CD14-positive monocyte (primary cell): ENCODE measurements at regions of chr17 and their contacts with region 1.

Region 1: GRCh38 chr17:81683584-81684237 is at the starts of genes ARL16 and HGS:
- DNase-seq: peak; percentile 98 to 99 (median 99)
- H3K4me3 ChIP-seq: peak within 1 kb of the TSS; percentile 84 to 99 (median 97)
- H3K4me3 Mint-ChIP-seq: peak within 1 kb of the TSS; percentile 87 to 92
- H3K27ac ChIP-seq: peak within 1 kb of the TSS; percentile 51 to 94
- H3K27ac Mint-ChIP-seq: peak within 1 kb of the TSS; percentile 86 to 98 (median 94)
- H3K4me1 ChIP-seq: peaks cover 22 to 25% of the 10 kb centered on the region in 2 donors
- H3K4me1 Mint-ChIP-seq: peaks cover 25% of the 10 kb centered on the region
- H3K27me3 ChIP-seq: no peaks in the 10 kb centered on the region
- H3K27me3 Mint-ChIP-seq: peaks cover 0 to 1% (median 0%) of the 10 kb centered on the region in 3 donors
- CTCF ChIP-seq: no peak
- polyA plus RNA-seq, gene ARL16: 17.6 to 43.0 (median 28.7) TPM
- polyA plus RNA-seq, gene HGS: 19.3 to 200 (median 28.0) TPM

Region 2: DNA sequence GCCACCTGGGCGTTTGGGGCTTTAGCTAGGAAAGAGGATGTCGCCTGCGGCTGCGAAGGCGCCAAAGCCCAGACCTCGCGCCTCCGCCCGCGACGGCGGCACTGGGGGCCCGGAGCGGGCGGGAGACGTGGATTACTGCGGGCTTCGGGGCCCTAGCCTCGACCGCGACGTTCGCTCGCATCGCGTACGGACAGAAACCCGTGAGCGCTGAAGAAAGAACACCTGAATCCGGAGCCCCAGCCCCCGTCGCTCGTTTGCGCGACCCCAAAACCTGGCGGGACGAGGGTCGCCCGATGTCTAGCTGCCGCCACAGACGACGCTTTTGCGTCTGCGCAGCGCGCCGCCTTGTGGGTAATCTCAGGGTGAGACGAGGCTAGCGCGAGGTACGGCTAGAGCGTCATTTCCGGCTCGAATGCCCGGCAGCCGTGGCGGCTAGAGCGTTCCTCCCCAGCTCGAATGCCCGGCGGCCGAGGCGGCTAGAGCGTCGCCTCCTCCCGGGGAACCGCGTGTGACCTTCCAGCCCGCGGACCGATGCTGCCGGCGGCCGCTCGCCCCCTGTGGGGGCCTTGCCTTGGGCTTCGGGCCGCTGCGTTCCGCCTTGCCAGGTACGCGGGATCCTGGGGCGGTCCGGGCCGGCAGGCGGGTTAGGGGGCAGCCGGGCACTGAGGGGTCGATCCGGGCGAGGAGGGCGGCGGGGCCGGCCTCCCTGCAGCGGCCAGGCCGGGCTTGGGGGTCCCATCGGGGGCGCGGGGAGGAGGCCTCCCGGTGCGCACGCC is 19.4 kb after region 1 on chr17 and contains the start of gene MRPL12:
- intact Hi-C with region 1: loop called (anchors 1 to 2 kb)
- DNase-seq: peak; percentile 84 to 92 (median 86)
- H3K4me3 ChIP-seq: peak within 1 kb of the TSS; percentile 67 to 89 (median 84)
- H3K4me3 Mint-ChIP-seq: peak within 1 kb of the TSS; percentile 91 to 96
- H3K27ac ChIP-seq: peak within 1 kb of the TSS; percentile 86 to 97
- H3K27ac Mint-ChIP-seq: peak within 1 kb of the TSS; percentile 93 to 97 (median 95)
- H3K4me1 ChIP-seq: peaks cover 22 to 32% of the 10 kb centered on the region in 2 donors
- H3K4me1 Mint-ChIP-seq: peaks cover 29% of the 10 kb centered on the region
- H3K27me3 ChIP-seq: no peaks in the 10 kb centered on the region
- H3K27me3 Mint-ChIP-seq: peaks cover 0 to 5% (median 0%) of the 10 kb centered on the region in 3 donors
- CTCF ChIP-seq: peak; percentile 29
- polyA plus RNA-seq, gene MRPL12: 21.2 to 57.0 (median 38.3) TPM